Vagina (tissue), 2 donors: ENCODE measurements at regions of chr14 and their contacts with region 1.

Region 1: GRCh38 chr14:76050797-76051392 is 65.3 kb downstream of the IFT43 start:
- DNase-seq: no peak
- H3K4me3 ChIP-seq: no peak overlapping the region
- H3K27ac ChIP-seq: no peak overlapping the region
- H3K4me1 ChIP-seq: peaks cover 17% of the 10 kb centered on the region
- H3K27me3 ChIP-seq: no peaks in the 10 kb centered on the region
- CTCF ChIP-seq: peak; percentile 62 to 85 (median 76)
- POLR2A ChIP-seq: no peak

Region 2: GRCh38 chr14:75941030-75941429 is 109.9 kb before region 1 on chr14:
- intact Hi-C with region 1: no loop called
- DNase-seq: no peak
- H3K4me3 ChIP-seq: no peak overlapping the region
- H3K27ac ChIP-seq: no peak overlapping the region
- H3K4me1 ChIP-seq: no peaks in the 10 kb centered on the region
- H3K27me3 ChIP-seq: no peaks in the 10 kb centered on the region
- CTCF ChIP-seq: no peak
- POLR2A ChIP-seq: no peak

Region 3: GRCh38 chr14:76352639-76353281 is 301.9 kb after region 1 on chr14:
- intact Hi-C with region 1: loop called (anchors 5 kb)
- DNase-seq: no peak
- H3K4me3 ChIP-seq: peak overlapping the region in 1 of 2 donors; percentile 34
- H3K27ac ChIP-seq: no peak overlapping the region
- H3K4me1 ChIP-seq: peaks cover 8% of the 10 kb centered on the region
- H3K27me3 ChIP-seq: no peaks in the 10 kb centered on the region
- CTCF ChIP-seq: peak; percentile 23 to 95 (median 82)
- POLR2A ChIP-seq: no peak